ENCODE measurements at regions of chr2 and their contacts with region 1.

Region 1: GRCh38 chr2:27071277-27071989 is at the start of gene OST4:
- DNase-seq: peak; percentile 92
- ATAC-seq: peak; percentile 92
- H3K4me3 ChIP-seq: peak within 1 kb of the TSS; percentile 86
- H3K27ac ChIP-seq: peak within 1 kb of the TSS; percentile 97
- H3K4me1 ChIP-seq: peaks cover 34% of the 10 kb centered on the region
- H3K27me3 ChIP-seq: no peaks in the 10 kb centered on the region
- CTCF ChIP-seq: no peak
- POLR2A ChIP-seq: peak; percentile 92
- RAD21 ChIP-seq: no peak
- total RNA-seq, gene OST4: 196 and 386 TPM in 2 replicates

Region 2: GRCh38 chr2:26964446-26965130 is 106.8 kb before region 1 on chr2:
- CTCF ChIA-PET with region 1: no interaction called
- POLR2A ChIA-PET with region 1: no interaction called
- dilution Hi-C with region 1: no loop called
- in situ Hi-C with region 1: no loop called
- intact Hi-C with region 1: loop called (anchors 5 kb)
- DNase-seq: no peak
- ATAC-seq: no peak
- H3K4me3 ChIP-seq: no peak overlapping the region
- H3K27ac ChIP-seq: no peak overlapping the region
- H3K4me1 ChIP-seq: 0 out of 2 replicates have a peak, but pooled peaks cover 2% of the 10 kb centered on the region
- H3K27me3 ChIP-seq: peaks cover 14% of the 10 kb centered on the region
- CTCF ChIP-seq: no peak
- POLR2A ChIP-seq: no peak
- RAD21 ChIP-seq: no peak

Region 3: DNA sequence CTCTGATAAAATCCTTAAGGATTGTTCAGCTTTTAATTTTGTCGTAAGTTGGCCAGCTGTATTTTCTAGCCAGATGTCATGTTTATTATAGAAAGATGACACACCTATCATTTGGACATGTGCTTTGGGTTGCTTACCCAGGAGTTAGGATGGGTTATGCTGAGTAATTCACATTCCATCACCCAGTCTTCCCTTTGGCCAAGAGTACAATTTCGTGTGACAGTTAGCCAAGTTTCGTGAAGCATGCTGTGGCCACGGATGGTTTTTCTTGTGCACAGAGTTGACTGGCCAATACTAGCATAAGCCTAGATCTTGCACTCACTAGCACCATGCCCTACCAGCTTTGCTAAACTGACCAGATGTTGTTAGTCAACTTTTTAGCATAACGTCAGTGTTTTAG is 95.2 kb before region 1 on chr2:
- CTCF ChIA-PET with region 1: no interaction called
- POLR2A ChIA-PET with region 1: no interaction called
- dilution Hi-C with region 1: no loop called
- in situ Hi-C with region 1: no loop called
- intact Hi-C with region 1: no loop called
- DNase-seq: peak; percentile 84
- ATAC-seq: peak; percentile 80
- H3K4me3 ChIP-seq: no peak overlapping the region
- H3K27ac ChIP-seq: no peak overlapping the region
- H3K4me1 ChIP-seq: peaks cover 6% of the 10 kb centered on the region
- H3K27me3 ChIP-seq: no peaks in the 10 kb centered on the region
- CTCF ChIP-seq: no peak
- POLR2A ChIP-seq: no peak
- RAD21 ChIP-seq: no peak

Region 4: GRCh38 chr2:26994983-26995382 is 76.5 kb before region 1 on chr2:
- CTCF ChIA-PET with region 1: no interaction called
- POLR2A ChIA-PET with region 1: interaction called, 14 read pairs
- dilution Hi-C with region 1: no loop called
- in situ Hi-C with region 1: no loop called
- intact Hi-C with region 1: no loop called
- DNase-seq: no peak
- ATAC-seq: no peak
- H3K4me3 ChIP-seq: no peak overlapping the region
- H3K27ac ChIP-seq: no peak overlapping the region
- H3K4me1 ChIP-seq: no peaks in the 10 kb centered on the region
- H3K27me3 ChIP-seq: no peaks in the 10 kb centered on the region; the same call in 1 of the 2 replicates
- CTCF ChIP-seq: no peak
- POLR2A ChIP-seq: no peak
- RAD21 ChIP-seq: no peak

Region 5: DNA sequence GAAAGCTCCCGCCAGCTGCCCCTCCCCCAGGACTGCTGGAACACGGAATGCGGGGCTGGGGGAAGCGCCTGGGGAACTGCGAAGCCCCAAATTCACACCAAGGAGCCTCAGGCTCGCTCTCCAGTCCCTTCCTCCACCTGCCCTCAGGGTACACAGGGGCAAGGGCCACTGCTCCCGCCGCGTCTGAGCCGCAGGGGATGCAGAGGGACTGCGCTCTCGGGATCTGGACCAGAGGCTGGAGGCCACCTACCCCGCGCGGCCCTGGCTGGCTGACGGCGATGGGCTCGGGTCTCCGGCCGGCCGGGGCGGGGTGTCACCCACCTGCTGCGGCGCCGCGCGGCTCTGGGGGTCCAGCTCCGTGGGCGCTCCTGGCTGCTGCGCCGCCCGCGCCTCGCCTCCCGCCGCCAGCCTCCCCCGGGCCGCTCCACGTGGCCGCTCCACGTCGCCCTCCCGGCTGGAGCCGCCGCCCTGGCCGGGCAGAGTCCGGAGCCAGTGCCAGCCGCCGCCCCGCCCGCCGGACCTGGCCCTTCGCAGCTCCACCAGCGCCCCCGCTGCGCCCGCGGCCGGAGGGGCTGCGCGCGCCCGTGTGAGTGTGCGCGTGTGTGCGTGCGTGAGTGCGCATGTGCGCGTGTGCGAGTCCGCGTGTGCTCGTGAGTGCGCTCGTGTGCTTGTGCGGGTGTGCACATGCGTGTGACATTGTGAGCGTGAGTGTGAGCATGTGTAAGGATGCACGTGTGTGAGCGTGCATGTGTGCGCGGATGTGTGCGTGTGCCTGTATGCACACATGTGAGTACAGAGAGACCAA is 47.3 kb after region 1 on chr2 and contains the start of gene CGREF1:
- CTCF ChIA-PET with region 1: no interaction called
- POLR2A ChIA-PET with region 1: no interaction called
- dilution Hi-C with region 1: no loop called
- in situ Hi-C with region 1: no loop called
- intact Hi-C with region 1: no loop called
- DNase-seq: no peak
- ATAC-seq: peak; percentile 36
- H3K4me3 ChIP-seq: peak within 1 kb of the TSS; percentile 42
- H3K27ac ChIP-seq: no peak within 1 kb of the TSS
- H3K4me1 ChIP-seq: peaks cover 5% of the 10 kb centered on the region
- H3K27me3 ChIP-seq: peaks cover 67% of the 10 kb centered on the region
- CTCF ChIP-seq: no peak
- POLR2A ChIP-seq: no peak
- RAD21 ChIP-seq: no peak
- total RNA-seq, gene CGREF1: 0.28 and 0.54 TPM in 2 replicates

Region 6: DNA sequence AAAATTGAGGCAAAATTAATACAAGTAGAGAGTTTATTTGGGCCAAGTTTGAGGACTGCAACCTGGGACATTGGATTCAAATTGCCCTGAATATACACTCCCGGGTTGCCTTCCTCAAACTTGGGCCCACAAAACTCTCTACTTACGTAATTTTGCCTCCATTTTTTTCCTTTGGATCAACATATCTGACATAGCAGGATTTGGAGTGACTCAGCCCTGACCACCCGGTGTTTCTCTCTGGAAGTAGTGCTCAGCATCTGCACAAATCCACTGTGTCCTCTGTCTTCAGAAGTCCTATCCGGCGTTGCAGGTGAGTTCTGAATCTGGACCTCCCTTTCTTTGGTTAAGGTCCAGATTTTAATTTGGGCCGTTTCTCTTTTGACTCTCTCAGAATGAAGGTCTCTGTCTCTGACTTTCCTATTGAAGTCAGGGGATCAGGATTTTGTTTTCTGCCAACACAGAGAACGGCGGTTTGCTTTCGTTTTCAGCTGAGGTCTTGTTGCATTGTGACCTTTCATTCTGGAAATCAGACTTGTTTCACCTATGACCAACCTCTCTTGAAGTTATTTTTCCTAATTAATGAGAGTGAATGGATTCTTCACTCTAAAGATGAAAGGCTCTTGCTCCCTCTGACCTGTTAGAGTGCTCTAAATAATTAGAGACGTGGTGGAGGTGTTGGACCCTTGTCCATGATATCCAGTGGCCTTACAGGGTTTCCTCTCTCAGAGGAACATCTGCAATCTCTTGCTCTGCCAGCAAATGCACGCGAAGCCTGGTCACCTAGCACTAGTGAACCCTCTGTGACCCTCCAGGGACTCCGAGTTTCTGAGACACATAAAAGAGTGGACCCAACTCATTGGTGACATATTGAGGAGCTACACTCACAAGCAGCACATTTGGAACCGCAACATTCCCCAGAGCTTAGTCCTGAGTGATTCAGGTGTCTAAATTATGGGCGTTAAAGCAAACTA is 91.0 kb after region 1 on chr2:
- CTCF ChIA-PET with region 1: no interaction called
- POLR2A ChIA-PET with region 1: no interaction called
- dilution Hi-C with region 1: no loop called
- in situ Hi-C with region 1: no loop called
- intact Hi-C with region 1: no loop called
- DNase-seq: peak; percentile 62
- ATAC-seq: peak; percentile 73
- H3K4me3 ChIP-seq: no peak overlapping the region
- H3K27ac ChIP-seq: no peak overlapping the region
- H3K4me1 ChIP-seq: no peaks in the 10 kb centered on the region
- H3K27me3 ChIP-seq: peaks cover 29% of the 10 kb centered on the region
- CTCF ChIP-seq: no peak
- POLR2A ChIP-seq: no peak
- RAD21 ChIP-seq: no peak

Region 7: DNA sequence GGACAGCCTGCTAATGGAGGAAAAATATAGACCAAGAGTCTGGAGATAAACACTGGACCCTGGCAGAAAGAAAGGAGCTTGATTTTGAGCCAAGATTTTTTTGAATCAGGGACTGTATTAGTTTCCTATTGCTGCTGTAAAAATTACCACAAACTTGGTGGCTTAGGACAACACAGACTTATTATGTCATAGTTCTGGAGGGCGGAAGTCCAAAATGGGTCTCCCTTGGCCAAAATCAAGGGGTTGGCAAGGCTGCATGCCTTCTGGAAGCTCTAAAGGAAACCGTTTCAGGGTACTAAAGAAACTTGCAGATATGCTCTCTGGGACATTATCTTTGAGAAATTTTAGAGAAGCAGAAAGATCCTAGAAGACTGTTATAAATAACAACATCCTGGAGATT is 959.2 kb after region 1 on chr2:
- CTCF ChIA-PET with region 1: no interaction called
- POLR2A ChIA-PET with region 1: no interaction called
- dilution Hi-C with region 1: no loop called
- in situ Hi-C with region 1: no loop called
- intact Hi-C with region 1: no loop called
- DNase-seq: no peak
- ATAC-seq: no peak
- H3K4me3 ChIP-seq: no peak overlapping the region
- H3K27ac ChIP-seq: no peak overlapping the region
- H3K4me1 ChIP-seq: no peaks in the 10 kb centered on the region; the same call in 1 of the 2 replicates
- H3K27me3 ChIP-seq: no peaks in the 10 kb centered on the region
- CTCF ChIP-seq: no peak
- POLR2A ChIP-seq: no peak
- RAD21 ChIP-seq: no peak